Activated B cell treated with CpG ODN at 0.5 μM for 24 hours (primary cell): ENCODE measurements at regions of chr5 and their contacts with region 1.

Region 1: GRCh38 chr5:133888625-133888991 is 79.8 kb downstream of the C5orf15 start:
- DNase-seq: no peak
- ATAC-seq: no peak
- H3K4me3 Mint-ChIP-seq: no peak overlapping the region
- H3K27ac Mint-ChIP-seq: no peak overlapping the region
- H3K4me1 Mint-ChIP-seq: peaks cover 20% of the 10 kb centered on the region
- H3K27me3 Mint-ChIP-seq: no peaks in the 10 kb centered on the region
- CTCF ChIP-seq: no peak

Region 2: GRCh38 chr5:133739181-133739780 is 149.3 kb before region 1 on chr5:
- CTCF ChIA-PET with region 1: no interaction called
- POLR2A ChIA-PET with region 1: interaction called, 10 read pairs
- intact Hi-C with region 1: no loop called
- DNase-seq: no peak
- ATAC-seq: no peak
- H3K4me3 Mint-ChIP-seq: no peak overlapping the region
- H3K27ac Mint-ChIP-seq: no peak overlapping the region
- H3K4me1 Mint-ChIP-seq: peaks cover 12% of the 10 kb centered on the region
- H3K27me3 Mint-ChIP-seq: peaks cover 2% of the 10 kb centered on the region
- CTCF ChIP-seq: no peak

Region 3: DNA sequence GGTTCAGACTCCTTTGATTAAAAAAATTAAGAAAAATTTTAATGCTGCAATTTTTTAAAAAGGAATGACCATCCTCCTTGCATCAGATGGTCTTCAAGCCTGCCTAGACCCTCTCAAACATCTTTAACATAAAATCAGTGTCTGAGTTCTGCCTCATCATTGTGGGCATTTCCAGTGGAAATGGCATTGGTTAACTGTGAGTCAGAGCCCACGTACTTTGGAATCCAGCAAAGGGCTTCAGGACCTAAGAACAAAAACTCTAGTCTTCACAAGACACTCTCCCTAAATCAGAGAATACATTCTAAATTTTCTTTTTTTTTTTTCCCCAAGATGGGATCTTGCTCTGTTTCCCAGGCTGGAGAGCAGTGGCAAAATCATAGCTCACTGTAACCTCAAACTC is 89.2 kb after region 1 on chr5:
- CTCF ChIA-PET with region 1: no interaction called
- POLR2A ChIA-PET with region 1: no interaction called
- intact Hi-C with region 1: no loop called
- DNase-seq: no peak
- ATAC-seq: no peak
- H3K4me3 Mint-ChIP-seq: no peak overlapping the region
- H3K27ac Mint-ChIP-seq: peak overlapping the region; percentile 68
- H3K4me1 Mint-ChIP-seq: peaks cover 29% of the 10 kb centered on the region
- H3K27me3 Mint-ChIP-seq: no peaks in the 10 kb centered on the region
- CTCF ChIP-seq: no peak